Heart right ventricle (tissue), 16 donors: ENCODE measurements at regions of chr10 and their contacts with region 1.

Region 1: GRCh38 chr10:57849691-57850357 is 417.9 kb downstream of the IPMK start:
- DNase-seq: no peak
- ATAC-seq: no peak
- H3K4me3 ChIP-seq: no peak overlapping the region
- H3K27ac ChIP-seq: no peak overlapping the region
- H3K4me1 ChIP-seq: peaks cover 0 to 20% (median 5%) of the 10 kb centered on the region in 9 donors
- H3K27me3 ChIP-seq: no peaks in the 10 kb centered on the region
- CTCF ChIP-seq: peak in 6 of 9 donors; percentile 34 to 60 (median 54)

Region 2: GRCh38 chr10:57506414-57507094 is 343.3 kb before region 1 on chr10:
- intact Hi-C with region 1: no loop called
- DNase-seq: no peak
- ATAC-seq: no peak
- H3K4me3 ChIP-seq: no peak overlapping the region
- H3K27ac ChIP-seq: no peak overlapping the region
- H3K4me1 ChIP-seq: no peaks in the 10 kb centered on the region
- H3K27me3 ChIP-seq: no peaks in the 10 kb centered on the region
- CTCF ChIP-seq: no peak

Region 3: GRCh38 chr10:57579926-57580325 is 269.9 kb before region 1 on chr10:
- intact Hi-C with region 1: loop called in 3 of 10 experiments (anchors 5 to 10 kb)
- DNase-seq: peak in 1 of 2 donors; percentile 15
- ATAC-seq: peak in 3 of 8 donors; percentile 44 to 71 (median 46)
- H3K4me3 ChIP-seq: no peak overlapping the region
- H3K27ac ChIP-seq: no peak overlapping the region
- H3K4me1 ChIP-seq: no peaks in the 10 kb centered on the region
- H3K27me3 ChIP-seq: no peaks in the 10 kb centered on the region
- CTCF ChIP-seq: peak in 8 of 9 donors; percentile 12 to 61 (median 47)

Region 4: DNA sequence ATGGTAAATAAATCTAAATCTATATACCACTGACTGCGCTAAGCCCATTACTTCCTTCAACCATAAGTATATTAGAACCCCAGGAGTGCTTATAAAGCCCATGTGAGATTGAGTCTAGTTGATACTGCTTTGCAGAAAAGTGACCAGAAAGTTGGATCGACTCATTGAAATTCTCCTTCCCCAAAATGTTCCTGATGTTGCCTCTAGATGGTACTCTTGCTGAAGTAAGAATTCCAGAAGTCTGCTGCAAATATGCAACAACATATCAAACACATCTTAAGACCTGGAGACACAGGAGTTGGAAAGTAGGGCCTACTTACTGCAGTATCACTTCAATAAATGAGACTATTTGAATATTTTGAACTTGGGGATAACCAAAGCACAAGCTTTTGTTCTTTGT is 132.9 kb before region 1 on chr10:
- intact Hi-C with region 1: loop called in 2 of 10 experiments (anchors 2 to 5 kb)
- DNase-seq: no peak
- ATAC-seq: no peak
- H3K4me3 ChIP-seq: no peak overlapping the region
- H3K27ac ChIP-seq: no peak overlapping the region
- H3K4me1 ChIP-seq: no peaks in the 10 kb centered on the region
- H3K27me3 ChIP-seq: no peaks in the 10 kb centered on the region
- CTCF ChIP-seq: peak in 7 of 9 donors; percentile 22 to 55 (median 42)

Region 5: GRCh38 chr10:57818522-57818921 is 31.3 kb before region 1 on chr10:
- intact Hi-C with region 1: no loop called
- DNase-seq: no peak
- ATAC-seq: no peak
- H3K4me3 ChIP-seq: no peak overlapping the region
- H3K27ac ChIP-seq: no peak overlapping the region
- H3K4me1 ChIP-seq: no peaks in the 10 kb centered on the region
- H3K27me3 ChIP-seq: no peaks in the 10 kb centered on the region
- CTCF ChIP-seq: no peak

Region 6: GRCh38 chr10:57898237-57898636 is 48.4 kb after region 1 on chr10:
- intact Hi-C with region 1: no loop called
- DNase-seq: no peak
- ATAC-seq: no peak
- H3K4me3 ChIP-seq: no peak overlapping the region
- H3K27ac ChIP-seq: no peak overlapping the region
- H3K4me1 ChIP-seq: no peaks in the 10 kb centered on the region
- H3K27me3 ChIP-seq: no peaks in the 10 kb centered on the region
- CTCF ChIP-seq: no peak

Region 7: DNA sequence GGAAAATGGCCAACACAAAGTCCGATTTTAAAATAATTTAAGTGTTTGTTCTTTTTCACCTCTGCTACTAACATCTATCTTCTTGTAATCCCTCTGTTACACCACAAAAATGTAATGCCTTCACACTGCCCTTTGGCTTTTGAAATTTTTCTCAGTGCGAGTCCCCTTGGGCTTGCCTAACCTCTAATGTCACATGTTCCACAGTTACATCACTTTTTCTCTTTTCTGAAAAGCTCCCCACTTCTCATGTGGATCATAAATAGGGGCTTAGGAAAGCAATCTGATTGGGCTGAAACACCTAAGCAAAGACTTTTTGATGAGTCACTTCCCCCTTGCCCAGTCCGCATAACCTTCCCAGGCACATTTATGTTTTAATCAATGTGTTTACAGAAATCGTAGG is 129.6 kb after region 1 on chr10:
- intact Hi-C with region 1: no loop called
- DNase-seq: no peak
- ATAC-seq: no peak
- H3K4me3 ChIP-seq: no peak overlapping the region
- H3K27ac ChIP-seq: no peak overlapping the region
- H3K4me1 ChIP-seq: no peaks in the 10 kb centered on the region
- H3K27me3 ChIP-seq: no peaks in the 10 kb centered on the region
- CTCF ChIP-seq: no peak